MCF 10A (cell line): ENCODE measurements at regions of chr2 and their contacts with region 1.

Region 1: DNA sequence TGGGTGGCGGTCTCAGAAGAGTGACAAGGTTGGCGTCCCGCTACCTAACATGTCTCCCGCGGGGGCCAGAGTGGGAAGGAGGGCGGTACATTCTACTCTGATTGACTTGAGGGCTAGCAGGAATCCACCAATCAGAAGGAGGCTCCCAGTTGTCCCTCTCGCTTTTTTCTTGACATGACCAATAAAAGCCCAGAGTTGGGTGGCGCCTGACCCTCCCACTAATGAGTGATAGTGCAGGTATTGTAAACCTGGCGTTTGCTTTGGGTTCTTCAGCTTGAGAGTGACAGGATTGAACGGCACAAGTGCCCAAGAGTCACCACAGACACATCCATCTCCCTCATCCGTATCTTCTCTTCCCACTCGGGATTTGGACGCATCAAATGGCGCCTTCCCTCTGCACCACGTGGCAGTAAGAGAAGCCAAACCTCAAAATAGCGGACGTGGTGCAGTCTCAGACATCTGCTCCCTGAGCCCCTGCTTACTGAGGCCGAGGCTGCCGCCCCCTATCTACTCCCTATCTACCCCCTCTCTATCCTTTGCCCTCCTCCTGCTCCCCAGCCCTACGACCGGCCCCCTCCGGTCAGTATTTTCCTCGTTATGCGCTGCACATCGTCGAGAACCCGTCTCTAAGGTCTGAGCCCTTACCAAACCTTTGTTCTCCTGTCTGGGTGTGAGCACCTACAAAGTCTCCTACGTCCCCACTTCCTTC is 768 bp upstream of the FAM161A start:
- DNase-seq: peak; percentile 98
- H3K4me3 Mint-ChIP-seq: peak overlapping the region; percentile 93
- H3K27ac Mint-ChIP-seq: peak overlapping the region; percentile 81
- H3K4me1 Mint-ChIP-seq: peaks cover 6% of the 10 kb centered on the region
- H3K27me3 Mint-ChIP-seq: no peaks in the 10 kb centered on the region
- CTCF ChIP-seq: no peak

Region 2: DNA sequence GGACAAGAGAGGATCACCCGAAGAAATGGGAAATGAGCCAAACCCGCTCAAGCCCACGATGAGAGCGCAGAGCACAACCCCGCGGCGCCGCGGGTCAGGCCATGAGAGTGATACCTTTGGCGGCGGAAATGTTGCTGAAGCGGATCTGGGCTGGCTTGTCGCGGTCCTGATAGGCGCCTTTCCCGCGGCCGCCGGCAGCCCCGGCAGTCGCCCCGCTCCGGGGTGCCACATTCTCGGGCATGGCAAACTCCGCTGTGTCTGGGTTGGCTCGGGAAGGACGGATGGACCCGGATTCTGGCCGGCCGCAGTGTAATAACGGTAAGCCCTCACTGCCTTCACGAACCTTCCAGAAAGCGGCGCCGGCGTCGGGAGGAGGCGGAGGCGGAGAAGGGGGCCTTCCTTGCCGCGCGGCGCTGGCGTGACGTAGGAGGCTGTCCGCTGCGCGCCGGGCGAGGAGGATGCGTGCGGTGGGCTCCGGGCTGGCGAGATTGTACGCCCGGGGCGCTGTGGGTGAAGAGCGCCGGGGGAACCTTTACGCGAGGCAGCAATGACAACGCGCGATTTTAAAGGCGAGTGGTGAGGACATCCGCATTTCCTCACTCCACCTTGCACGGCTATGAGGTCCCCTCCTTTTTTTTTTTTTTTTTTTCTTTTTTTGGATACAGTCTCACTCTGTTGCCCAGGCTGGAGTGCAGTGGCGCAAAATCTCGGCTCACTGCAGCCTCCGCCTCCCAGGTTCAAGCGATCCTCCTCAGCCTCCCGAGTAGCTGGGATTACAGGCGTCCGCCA is 33.8 kb after region 1 on chr2 and contains the start of gene CCT4:
- CTCF ChIA-PET with region 1: no interaction called
- POLR2A ChIA-PET with region 1: interaction called, 16 read pairs
- intact Hi-C with region 1: no loop called
- DNase-seq: peak; percentile 84
- H3K4me3 Mint-ChIP-seq: peak within 1 kb of the TSS; percentile 91
- H3K27ac Mint-ChIP-seq: peak within 1 kb of the TSS; percentile 99
- H3K4me1 Mint-ChIP-seq: peaks cover 11% of the 10 kb centered on the region
- H3K27me3 Mint-ChIP-seq: no peaks in the 10 kb centered on the region
- CTCF ChIP-seq: no peak
- total RNA-seq, gene CCT4: 176 and 203 TPM in 2 replicates

Region 3: GRCh38 chr2:61905372-61906185 is 51.0 kb after region 1 on chr2 and contains the start of gene COMMD1:
- CTCF ChIA-PET with region 1: interaction called, 4 read pairs
- POLR2A ChIA-PET with region 1: interaction called, 13 read pairs
- intact Hi-C with region 1: no loop called
- DNase-seq: peak; percentile 72
- H3K4me3 Mint-ChIP-seq: peak within 1 kb of the TSS; percentile 98
- H3K27ac Mint-ChIP-seq: peak within 1 kb of the TSS; percentile 91
- H3K4me1 Mint-ChIP-seq: no peaks in the 10 kb centered on the region
- H3K27me3 Mint-ChIP-seq: no peaks in the 10 kb centered on the region
- CTCF ChIP-seq: no peak
- total RNA-seq, gene COMMD1: 33.8 and 38.7 TPM in 2 replicates